Sigmoid colon (tissue), 7 donors: ENCODE measurements at regions of chr10 and their contacts with region 1.

Region 1: DNA sequence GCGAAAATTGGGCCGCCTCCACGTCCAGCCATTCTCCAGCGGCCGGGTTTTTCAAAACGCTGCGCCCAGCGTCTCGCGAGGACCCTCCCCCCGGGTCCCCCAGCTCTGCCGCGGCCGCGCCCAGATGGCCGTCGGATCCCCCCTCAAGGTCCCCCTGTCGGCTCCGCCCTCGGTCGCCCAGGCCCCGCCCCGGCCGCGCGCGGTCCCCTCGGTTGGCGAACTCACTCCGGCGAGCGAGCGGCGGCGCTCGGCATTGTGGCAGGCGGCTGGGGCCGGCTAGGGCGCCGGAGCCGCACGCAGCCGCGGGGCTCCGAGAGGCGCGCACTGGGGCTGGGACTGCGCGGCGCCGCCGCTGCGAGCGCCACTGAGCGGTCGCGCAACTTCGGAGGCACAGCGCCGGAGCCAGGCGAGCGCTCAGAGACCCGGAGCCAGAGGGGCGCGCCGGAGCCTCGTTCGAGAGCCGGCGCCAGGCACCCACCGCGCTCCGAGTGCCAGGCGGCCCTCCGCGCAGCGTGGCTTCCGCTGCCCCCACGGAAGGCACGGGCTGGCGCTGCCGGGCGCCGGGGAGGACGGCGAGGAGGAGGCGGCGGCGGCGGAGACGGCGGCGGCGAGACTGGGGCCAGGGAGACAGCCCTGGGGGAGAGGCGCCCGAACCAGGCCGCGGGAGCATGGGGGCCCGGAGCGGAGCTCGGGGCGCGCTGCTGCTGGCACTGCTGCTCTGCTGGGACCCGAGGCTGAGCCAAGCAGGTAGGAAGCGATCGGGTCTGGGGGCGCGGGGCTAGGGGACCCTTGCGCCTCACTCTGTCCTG is at the start of gene UNC5B:
- DNase-seq: peak; percentile 94
- H3K4me3 ChIP-seq: peak within 1 kb of the TSS; percentile 38 to 81 (median 58)
- H3K27ac ChIP-seq: peak within 1 kb of the TSS; percentile 68 to 86 (median 79)
- H3K4me1 ChIP-seq: peaks cover 0 to 43% (median 35%) of the 10 kb centered on the region in 4 donors
- H3K27me3 ChIP-seq: peaks cover 16 to 37% (median 17%) of the 10 kb centered on the region in 3 donors
- CTCF ChIP-seq: no peak
- EP300 ChIP-seq: no peak
- POLR2A ChIP-seq: no peak
- total RNA-seq, gene UNC5B: 1.4 to 3.0 (median 1.7) TPM

Region 2: GRCh38 chr10:70404036-70404786 is 808.3 kb before region 1 on chr10 and contains the start of gene EIF4EBP2:
- intact Hi-C with region 1: loop called (anchors 10 kb)
- DNase-seq: peak; percentile 99
- H3K4me3 ChIP-seq: peak within 1 kb of the TSS; percentile 88 to 92 (median 88)
- H3K27ac ChIP-seq: peak within 1 kb of the TSS; percentile 99 to 100 (median 100)
- H3K4me1 ChIP-seq: peaks cover 0 to 38% (median 29%) of the 10 kb centered on the region in 4 donors
- H3K27me3 ChIP-seq: no peaks in the 10 kb centered on the region
- CTCF ChIP-seq: no peak
- EP300 ChIP-seq: peak in 1 of 4 donors; percentile 9
- POLR2A ChIP-seq: peak; percentile 95 to 97
- total RNA-seq, gene EIF4EBP2: 67.1 to 76.0 (median 72.6) TPM

Region 3: GRCh38 chr10:70815504-70816219 is 396.9 kb before region 1 on chr10 and contains the start of gene SGPL1:
- intact Hi-C with region 1: loop called (anchors 10 kb)
- DNase-seq: peak; percentile 91
- H3K4me3 ChIP-seq: peak within 1 kb of the TSS; percentile 69 to 86 (median 84)
- H3K27ac ChIP-seq: peak within 1 kb of the TSS; percentile 94 to 97 (median 95)
- H3K4me1 ChIP-seq: peaks cover 0 to 18% (median 13%) of the 10 kb centered on the region in 4 donors
- H3K27me3 ChIP-seq: no peaks in the 10 kb centered on the region
- CTCF ChIP-seq: peak; percentile 57 to 98 (median 78)
- EP300 ChIP-seq: no peak
- POLR2A ChIP-seq: no peak
- total RNA-seq, gene SGPL1: 18.5 to 22.2 (median 20.2) TPM

Region 4: GRCh38 chr10:70931168-70931815 is 281.2 kb before region 1 on chr10:
- intact Hi-C with region 1: loop called (anchors 2 kb)
- DNase-seq: no peak
- H3K4me3 ChIP-seq: no peak overlapping the region
- H3K27ac ChIP-seq: no peak overlapping the region
- H3K4me1 ChIP-seq: peaks cover 0 to 35% (median 32%) of the 10 kb centered on the region in 4 donors
- H3K27me3 ChIP-seq: no peaks in the 10 kb centered on the region
- CTCF ChIP-seq: no peak
- EP300 ChIP-seq: no peak
- POLR2A ChIP-seq: no peak

Region 5: GRCh38 chr10:71255808-71256660 is 43.5 kb after region 1 on chr10:
- intact Hi-C with region 1: loop called (anchors 5 kb)
- DNase-seq: peak; percentile 84
- H3K4me3 ChIP-seq: no peak overlapping the region
- H3K27ac ChIP-seq: peak overlapping the region in 1 of 4 donors; percentile 14
- H3K4me1 ChIP-seq: peaks cover 0 to 37% (median 34%) of the 10 kb centered on the region in 4 donors
- H3K27me3 ChIP-seq: no peaks in the 10 kb centered on the region
- CTCF ChIP-seq: no peak
- EP300 ChIP-seq: no peak
- POLR2A ChIP-seq: no peak

Region 6: GRCh38 chr10:71268247-71268691 is 55.7 kb after region 1 on chr10:
- intact Hi-C with region 1: loop called (anchors 1 kb)
- DNase-seq: no peak
- H3K4me3 ChIP-seq: no peak overlapping the region
- H3K27ac ChIP-seq: peak overlapping the region in 1 of 4 donors; percentile 26
- H3K4me1 ChIP-seq: peaks cover 2 to 52% (median 33%) of the 10 kb centered on the region in 4 donors
- H3K27me3 ChIP-seq: no peaks in the 10 kb centered on the region
- CTCF ChIP-seq: peak; percentile 29 to 38 (median 33)
- EP300 ChIP-seq: no peak
- POLR2A ChIP-seq: no peak

Region 7: GRCh38 chr10:71285180-71285545 is 72.6 kb after region 1 on chr10:
- intact Hi-C with region 1: loop called (anchors 5 kb)
- DNase-seq: no peak
- H3K4me3 ChIP-seq: no peak overlapping the region
- H3K27ac ChIP-seq: no peak overlapping the region
- H3K4me1 ChIP-seq: no peaks in the 10 kb centered on the region
- H3K27me3 ChIP-seq: no peaks in the 10 kb centered on the region
- CTCF ChIP-seq: peak; percentile 52 to 79 (median 68)
- EP300 ChIP-seq: no peak
- POLR2A ChIP-seq: no peak